ENCODE measurements at regions of chr12 and their contacts with region 1.

Region 1: GRCh38 chr12:8956772-8957171 is 7.3 kb upstream of the M6PR start:
- DNase-seq: no peak
- ATAC-seq: no peak
- H3K4me3 ChIP-seq: no peak overlapping the region
- H3K27ac ChIP-seq: no peak overlapping the region
- H3K4me1 ChIP-seq: no peaks in the 10 kb centered on the region
- H3K27me3 ChIP-seq: no peaks in the 10 kb centered on the region

Region 2: DNA sequence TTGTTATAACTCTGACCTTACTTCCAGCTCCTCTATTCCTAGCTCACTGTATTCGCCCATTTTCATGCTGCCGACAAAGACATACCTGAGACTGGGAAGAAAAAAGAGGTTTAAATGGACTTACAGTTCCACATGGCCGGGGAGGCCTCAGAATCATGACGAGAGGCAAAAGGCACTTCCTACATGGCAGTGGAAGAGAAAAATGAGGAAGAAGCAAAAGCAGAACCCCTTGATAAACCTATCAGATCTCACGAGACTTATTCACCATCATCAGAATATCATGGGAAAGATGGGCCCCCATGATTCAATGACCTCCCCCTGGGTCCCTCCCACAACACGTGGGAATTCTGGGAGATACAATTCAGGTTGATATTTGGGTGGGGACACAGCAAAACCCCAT is 56.9 kb before region 1 on chr12:
- intact Hi-C with region 1: no loop called
- DNase-seq: no peak
- ATAC-seq: no peak
- H3K4me3 ChIP-seq: no peak overlapping the region
- H3K27ac ChIP-seq: no peak overlapping the region
- H3K4me1 ChIP-seq: no peaks in the 10 kb centered on the region
- H3K27me3 ChIP-seq: no peaks in the 10 kb centered on the region

Region 3: GRCh38 chr12:9032202-9033178 is 75.7 kb after region 1 on chr12:
- intact Hi-C with region 1: loop called in 1 of 2 experiments (anchors 5 kb)
- DNase-seq: no peak
- ATAC-seq: no peak
- H3K4me3 ChIP-seq: no peak overlapping the region
- H3K27ac ChIP-seq: no peak overlapping the region
- H3K4me1 ChIP-seq: no peaks in the 10 kb centered on the region
- H3K27me3 ChIP-seq: no peaks in the 10 kb centered on the region

Measured in aorta (tissue), 5 donors.